ENCODE measurements at regions of chr3 and their contacts with region 1.

Region 1: DNA sequence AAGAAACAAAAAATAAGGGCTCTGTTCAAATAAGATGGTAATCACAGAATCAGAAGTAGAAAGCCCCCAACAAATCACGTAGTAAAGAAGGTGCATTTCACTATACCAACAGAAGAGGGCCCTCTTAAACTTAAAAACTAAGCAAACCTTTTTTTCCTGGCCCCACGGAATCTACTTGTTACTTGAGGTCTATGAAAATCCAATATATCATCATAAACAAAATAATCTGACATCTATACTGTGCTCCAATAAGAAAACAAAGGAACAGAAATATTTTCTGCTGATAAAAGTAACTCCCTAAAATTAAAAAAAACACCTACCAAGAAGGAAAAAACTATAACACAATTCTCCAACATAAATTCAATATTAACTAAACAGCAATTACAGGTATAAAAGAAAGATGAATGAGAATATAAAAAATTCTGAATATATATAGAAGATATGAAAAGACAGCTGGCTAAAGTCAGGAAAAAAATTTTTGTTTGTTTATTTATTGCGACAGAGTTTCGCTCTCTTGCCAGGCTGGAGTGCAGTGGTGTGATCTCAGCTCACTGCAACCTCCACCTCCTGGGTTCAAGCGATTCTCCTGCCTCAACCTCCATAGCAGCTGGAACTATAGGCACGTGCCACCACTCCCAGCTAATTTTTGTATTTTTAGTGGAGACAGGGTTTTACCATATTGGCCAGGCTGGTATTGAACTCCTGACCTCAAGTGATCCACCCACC is 81.8 kb downstream of the CLASP2 start:
- DNase-seq: no peak
- H3K4me3 ChIP-seq: no peak overlapping the region
- H3K27ac ChIP-seq: no peak overlapping the region
- H3K4me1 ChIP-seq: peaks cover 0 to 7% (median 0%) of the 10 kb centered on the region in 3 donors
- H3K27me3 ChIP-seq: no peaks in the 10 kb centered on the region
- CTCF ChIP-seq: peak; percentile 22 to 61 (median 50)
- POLR2A ChIP-seq: no peak

Region 2: GRCh38 chr3:33746412-33747116 is 110.3 kb after region 1 on chr3:
- intact Hi-C with region 1: no loop called
- DNase-seq: no peak
- H3K4me3 ChIP-seq: no peak overlapping the region
- H3K27ac ChIP-seq: no peak overlapping the region
- H3K4me1 ChIP-seq: no peaks in the 10 kb centered on the region
- H3K27me3 ChIP-seq: peaks cover 0 to 4% (median 0%) of the 10 kb centered on the region in 4 donors
- CTCF ChIP-seq: no peak
- POLR2A ChIP-seq: no peak

Region 3: GRCh38 chr3:33787328-33788009 is 151.2 kb after region 1 on chr3:
- intact Hi-C with region 1: loop called (anchors 10 kb)
- DNase-seq: no peak
- H3K4me3 ChIP-seq: peak overlapping the region in 2 of 4 donors; percentile 8 to 49
- H3K27ac ChIP-seq: no peak overlapping the region
- H3K4me1 ChIP-seq: peaks cover 0 to 6% (median 0%) of the 10 kb centered on the region in 3 donors
- H3K27me3 ChIP-seq: peaks cover 0 to 7% (median 0%) of the 10 kb centered on the region in 4 donors
- CTCF ChIP-seq: peak; percentile 21 to 76 (median 68)
- POLR2A ChIP-seq: no peak

Measured in esophagus squamous epithelium (tissue), 5 donors.